B cell (primary cell): ENCODE measurements at regions of chr2 and their contacts with region 1.

Region 1: GRCh38 chr2:97740590-97741182 is 27.3 kb downstream of the ZAP70 start:
- DNase-seq: peak; percentile 59
- ATAC-seq: peak; percentile 73
- H3K4me3 ChIP-seq: no peak overlapping the region
- H3K4me3 Mint-ChIP-seq: no peak overlapping the region
- H3K27ac ChIP-seq: no peak overlapping the region
- H3K27ac Mint-ChIP-seq: no peak overlapping the region
- H3K4me1 ChIP-seq: peaks cover 12 to 20% of the 10 kb centered on the region in 2 donors
- H3K4me1 Mint-ChIP-seq: peaks cover 33% of the 10 kb centered on the region
- H3K27me3 ChIP-seq: no peaks in the 10 kb centered on the region
- H3K27me3 Mint-ChIP-seq: peaks cover 4% of the 10 kb centered on the region
- CTCF ChIP-seq: peak; percentile 83

Region 2: GRCh38 chr2:97718051-97718882 is 22.4 kb before region 1 on chr2:
- CTCF ChIA-PET with region 1: interaction called, 12 read pairs
- POLR2A ChIA-PET with region 1: no interaction called
- intact Hi-C with region 1: no loop called
- DNase-seq: peak; percentile 63
- ATAC-seq: peak; percentile 90
- H3K4me3 ChIP-seq: peak overlapping the region in 4 of 5 experiments; percentile 7 to 48 (median 28)
- H3K4me3 Mint-ChIP-seq: peak overlapping the region; percentile 89
- H3K27ac ChIP-seq: peak overlapping the region; percentile 53 to 60
- H3K27ac Mint-ChIP-seq: peak overlapping the region; percentile 96
- H3K4me1 ChIP-seq: peaks cover 26 to 27% of the 10 kb centered on the region in 2 donors
- H3K4me1 Mint-ChIP-seq: peaks cover 38% of the 10 kb centered on the region
- H3K27me3 ChIP-seq: no peaks in the 10 kb centered on the region
- H3K27me3 Mint-ChIP-seq: no peaks in the 10 kb centered on the region
- CTCF ChIP-seq: no peak

Region 3: GRCh38 chr2:97751752-97752151 is 11.1 kb after region 1 on chr2:
- CTCF ChIA-PET with region 1: interaction called, 36 read pairs
- POLR2A ChIA-PET with region 1: no interaction called
- intact Hi-C with region 1: no loop called
- DNase-seq: no peak
- ATAC-seq: no peak
- H3K4me3 ChIP-seq: no peak overlapping the region
- H3K4me3 Mint-ChIP-seq: no peak overlapping the region
- H3K27ac ChIP-seq: no peak overlapping the region
- H3K27ac Mint-ChIP-seq: peak overlapping the region; percentile 62
- H3K4me1 ChIP-seq: peaks cover 10 to 12% of the 10 kb centered on the region in 2 donors
- H3K4me1 Mint-ChIP-seq: peaks cover 17% of the 10 kb centered on the region
- H3K27me3 ChIP-seq: no peaks in the 10 kb centered on the region
- H3K27me3 Mint-ChIP-seq: no peaks in the 10 kb centered on the region
- CTCF ChIP-seq: no peak

Region 4: DNA sequence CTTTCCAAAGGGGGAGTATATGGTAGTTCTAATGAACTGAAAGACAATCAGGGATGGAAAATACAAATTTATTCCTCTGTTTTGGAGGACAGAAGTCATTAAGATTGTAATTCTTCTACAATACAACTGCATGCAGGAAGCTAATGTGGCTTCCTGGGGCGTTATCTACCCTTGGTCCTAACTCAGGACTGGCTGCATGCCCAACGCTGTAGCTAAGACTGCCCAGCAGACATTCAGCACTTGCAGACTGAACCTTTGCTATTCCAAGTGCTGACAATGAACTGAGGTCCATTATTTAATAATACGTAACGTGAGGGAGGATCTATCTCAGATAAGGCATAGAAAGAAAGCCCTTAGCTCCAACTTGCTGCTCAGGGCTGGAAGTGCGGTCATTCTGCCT is 25.9 kb after region 1 on chr2:
- CTCF ChIA-PET with region 1: interaction called, 11 read pairs
- POLR2A ChIA-PET with region 1: no interaction called
- intact Hi-C with region 1: no loop called
- DNase-seq: no peak
- ATAC-seq: no peak
- H3K4me3 ChIP-seq: no peak overlapping the region
- H3K4me3 Mint-ChIP-seq: no peak overlapping the region
- H3K27ac ChIP-seq: no peak overlapping the region
- H3K27ac Mint-ChIP-seq: no peak overlapping the region
- H3K4me1 ChIP-seq: peaks cover 0 to 3% of the 10 kb centered on the region in 2 donors
- H3K4me1 Mint-ChIP-seq: peaks cover 3% of the 10 kb centered on the region
- H3K27me3 ChIP-seq: no peaks in the 10 kb centered on the region
- H3K27me3 Mint-ChIP-seq: no peaks in the 10 kb centered on the region
- CTCF ChIP-seq: no peak

Region 5: GRCh38 chr2:98188351-98189049 is 447.8 kb after region 1 on chr2:
- CTCF ChIA-PET with region 1: interaction called, 12 read pairs
- POLR2A ChIA-PET with region 1: no interaction called
- intact Hi-C with region 1: no loop called
- DNase-seq: peak; percentile 42
- ATAC-seq: no peak
- H3K4me3 ChIP-seq: no peak overlapping the region
- H3K4me3 Mint-ChIP-seq: no peak overlapping the region
- H3K27ac ChIP-seq: no peak overlapping the region
- H3K27ac Mint-ChIP-seq: no peak overlapping the region
- H3K4me1 ChIP-seq: no peaks in the 10 kb centered on the region
- H3K4me1 Mint-ChIP-seq: no peaks in the 10 kb centered on the region
- H3K27me3 ChIP-seq: no peaks in the 10 kb centered on the region
- H3K27me3 Mint-ChIP-seq: peaks cover 5% of the 10 kb centered on the region
- CTCF ChIP-seq: peak; percentile 15

Region 6: GRCh38 chr2:98269274-98269673 is 528.6 kb after region 1 on chr2:
- CTCF ChIA-PET with region 1: interaction called, 11 read pairs
- POLR2A ChIA-PET with region 1: no interaction called
- intact Hi-C with region 1: no loop called
- DNase-seq: peak; percentile 59
- ATAC-seq: peak; percentile 49
- H3K4me3 ChIP-seq: no peak overlapping the region
- H3K4me3 Mint-ChIP-seq: no peak overlapping the region
- H3K27ac ChIP-seq: no peak overlapping the region
- H3K27ac Mint-ChIP-seq: no peak overlapping the region
- H3K4me1 ChIP-seq: no peaks in the 10 kb centered on the region
- H3K4me1 Mint-ChIP-seq: no peaks in the 10 kb centered on the region
- H3K27me3 ChIP-seq: no peaks in the 10 kb centered on the region
- H3K27me3 Mint-ChIP-seq: peaks cover 1% of the 10 kb centered on the region
- CTCF ChIP-seq: peak; percentile 73

Region 7: GRCh38 chr2:98385050-98385699 is 644.5 kb after region 1 on chr2:
- CTCF ChIA-PET with region 1: interaction called, 34 read pairs
- POLR2A ChIA-PET with region 1: no interaction called
- intact Hi-C with region 1: no loop called
- DNase-seq: peak; percentile 78
- ATAC-seq: peak; percentile 88
- H3K4me3 ChIP-seq: no peak overlapping the region
- H3K4me3 Mint-ChIP-seq: no peak overlapping the region
- H3K27ac ChIP-seq: no peak overlapping the region
- H3K27ac Mint-ChIP-seq: no peak overlapping the region
- H3K4me1 ChIP-seq: peaks cover 0 to 2% of the 10 kb centered on the region in 2 donors
- H3K4me1 Mint-ChIP-seq: no peaks in the 10 kb centered on the region
- H3K27me3 ChIP-seq: no peaks in the 10 kb centered on the region
- H3K27me3 Mint-ChIP-seq: peaks cover 14% of the 10 kb centered on the region
- CTCF ChIP-seq: peak; percentile 94